ENCODE measurements at regions of chr18 and their contacts with region 1.

Region 1: GRCh38 chr18:43620936-43621335 is 343.6 kb upstream of the SYT4 start:
- DNase-seq: peak; percentile 54
- H3K4me3 Mint-ChIP-seq: no peak overlapping the region
- H3K27ac Mint-ChIP-seq: no peak overlapping the region
- H3K4me1 Mint-ChIP-seq: no peaks in the 10 kb centered on the region
- H3K27me3 Mint-ChIP-seq: peaks cover 34% of the 10 kb centered on the region
- CTCF ChIP-seq: peak; percentile 47

Region 2: DNA sequence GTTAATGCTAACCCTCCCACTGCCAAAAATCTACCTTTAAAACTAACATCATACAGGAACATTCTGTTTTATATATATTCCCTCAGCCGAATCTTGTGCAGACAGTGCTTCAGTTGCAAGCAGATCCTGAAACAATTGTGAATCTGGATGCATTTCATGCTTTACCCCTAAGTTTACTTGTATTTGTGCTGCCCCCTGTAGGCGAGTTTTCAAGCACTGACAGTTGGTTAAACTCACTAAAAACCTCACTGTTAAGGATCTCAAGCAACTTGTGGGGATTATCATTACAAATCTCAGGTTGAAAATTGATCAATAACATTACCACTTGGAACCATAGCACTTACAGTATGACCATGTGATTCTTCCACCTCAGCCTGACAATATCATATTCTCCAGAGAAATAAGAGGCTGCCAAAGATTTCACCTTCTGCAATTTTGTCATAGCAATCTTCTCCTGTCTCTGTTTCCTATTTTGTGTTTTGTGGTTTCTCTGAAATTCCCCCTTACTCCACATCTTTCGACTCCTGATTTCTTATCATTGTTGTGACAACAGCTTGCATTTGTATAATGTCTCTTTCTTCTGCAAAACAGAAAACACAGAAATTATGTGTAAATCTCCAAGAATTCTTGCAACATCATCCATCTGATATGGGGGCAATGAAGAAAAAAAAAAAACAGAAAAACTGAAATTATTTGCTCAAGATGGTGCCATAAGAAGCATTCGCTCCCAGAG is 705.1 kb after region 1 on chr18:
- CTCF ChIA-PET with region 1: interaction called, 4 read pairs
- POLR2A ChIA-PET with region 1: no interaction called
- intact Hi-C with region 1: loop called (anchors 1 kb)
- DNase-seq: peak; percentile 78
- H3K4me3 Mint-ChIP-seq: no peak overlapping the region
- H3K27ac Mint-ChIP-seq: no peak overlapping the region
- H3K4me1 Mint-ChIP-seq: no peaks in the 10 kb centered on the region
- H3K27me3 Mint-ChIP-seq: no peaks in the 10 kb centered on the region
- CTCF ChIP-seq: peak; percentile 54

Measured in MCF 10A (cell line).